ENCODE measurements at regions of chr3 and their contacts with region 1.

Region 1: DNA sequence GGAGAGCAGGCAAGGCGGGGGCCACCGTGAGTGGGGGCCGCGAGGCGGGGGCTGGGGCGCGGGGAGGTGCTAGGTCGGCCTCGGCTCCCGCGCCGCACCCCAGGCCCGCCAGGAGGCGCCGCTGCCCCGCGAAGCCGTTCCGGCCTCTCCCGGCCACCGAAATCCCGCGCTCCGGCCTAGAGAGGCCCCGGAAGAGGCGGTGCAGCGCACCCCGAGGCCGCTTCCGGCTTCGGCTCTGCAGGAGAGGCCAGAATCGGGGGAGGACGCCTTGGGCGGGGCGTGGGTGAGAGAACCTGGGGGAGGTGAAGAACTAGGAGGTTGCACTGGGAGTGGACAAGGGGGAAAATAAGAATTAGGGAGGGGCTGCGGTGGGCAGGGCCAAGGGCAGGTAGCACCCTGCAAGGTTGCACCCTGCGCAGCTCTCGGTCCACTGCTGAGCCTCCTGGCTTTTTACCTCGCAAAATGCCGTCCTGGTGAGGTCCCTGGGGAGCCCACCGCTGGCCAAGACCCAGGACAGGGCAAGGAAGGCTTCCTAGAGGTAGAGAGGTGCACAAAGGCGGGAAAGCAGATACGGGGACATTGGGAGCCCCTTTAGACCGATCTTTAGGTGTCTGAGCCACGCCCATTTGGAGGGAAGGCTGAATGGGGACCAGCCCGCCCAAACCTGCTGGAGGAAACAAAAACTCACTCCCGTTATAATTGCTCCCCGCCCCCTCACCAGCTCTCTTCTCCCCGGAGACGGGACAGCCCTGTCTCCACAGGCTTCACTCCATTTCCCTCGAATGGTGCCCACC is 8.4 kb upstream of the GNAI2 start:
- DNase-seq: peak; percentile 92 to 97 (median 96)
- ATAC-seq: peak; percentile 95
- H3K4me3 ChIP-seq: peak overlapping the region; percentile 27
- H3K4me1 ChIP-seq: peaks cover 12% of the 10 kb centered on the region
- CTCF ChIP-seq: peak; percentile 84

Region 2: DNA sequence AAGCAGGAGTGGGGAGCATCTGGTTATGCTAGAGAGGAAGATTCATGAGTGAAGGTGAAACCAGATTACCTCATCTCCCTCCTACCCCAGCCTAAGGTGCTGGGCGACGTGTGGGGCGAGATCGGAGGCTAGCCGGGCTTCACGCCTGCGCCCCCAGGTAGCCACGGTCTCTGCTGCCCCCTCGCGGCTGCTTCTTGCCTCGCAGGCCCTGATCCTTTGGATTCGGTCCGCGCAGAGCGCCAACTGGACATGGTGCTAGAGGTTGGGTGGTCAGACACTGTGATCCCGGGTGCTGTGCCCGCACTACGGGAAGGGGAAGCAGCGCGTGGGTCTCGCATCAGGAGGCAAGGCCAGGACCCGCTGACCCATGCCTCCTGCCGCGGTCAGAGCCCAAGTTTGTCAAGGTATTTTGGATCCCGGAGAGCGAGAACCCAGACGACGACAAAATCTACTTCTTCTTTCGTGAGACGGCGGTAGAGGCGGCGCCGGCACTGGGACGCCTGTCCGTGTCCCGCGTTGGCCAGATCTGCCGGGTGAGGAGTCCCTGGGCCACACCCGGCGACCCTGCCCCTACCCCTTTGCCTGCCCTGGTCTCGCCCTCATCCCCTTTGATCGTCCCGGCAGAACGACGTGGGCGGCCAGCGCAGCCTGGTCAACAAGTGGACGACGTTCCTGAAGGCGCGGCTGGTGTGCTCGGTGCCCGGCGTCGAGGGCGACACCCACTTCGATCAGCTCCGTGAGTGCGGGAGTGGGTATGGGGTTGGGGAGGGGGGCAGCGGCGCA is 45.5 kb after region 1 on chr3:
- intact Hi-C with region 1: loop called in 1 of 2 experiments (anchors 10 kb)
- DNase-seq: peak; percentile 89 to 95 (median 92)
- ATAC-seq: peak; percentile 72
- H3K4me3 ChIP-seq: no peak overlapping the region
- H3K4me1 ChIP-seq: peaks cover 40% of the 10 kb centered on the region
- CTCF ChIP-seq: peak; percentile 97